ENCODE measurements at regions of chr1 and their contacts with region 1.

Region 1: GRCh38 chr1:245788269-245788668 is 633.5 kb downstream of the KIF26B start:
- DNase-seq: no peak
- ATAC-seq: peak in 2 of 4 donors; percentile 37 to 41
- H3K4me3 ChIP-seq: no peak overlapping the region
- H3K27ac ChIP-seq: peak overlapping the region in 1 of 12 donors; percentile 19
- H3K4me1 ChIP-seq: peaks cover 0 to 20% (median 1%) of the 10 kb centered on the region in 12 donors
- H3K27me3 ChIP-seq: no peaks in the 10 kb centered on the region
- CTCF ChIP-seq: no peak
- POLR2A ChIP-seq: no peak

Region 2: GRCh38 chr1:245549996-245550719 is 238.1 kb before region 1 on chr1:
- intact Hi-C with region 1: loop called in 1 of 10 experiments (anchors 5 kb)
- DNase-seq: no peak
- ATAC-seq: peak in 1 of 4 donors; percentile 26
- H3K4me3 ChIP-seq: peak overlapping the region in 1 of 12 donors; percentile 2
- H3K27ac ChIP-seq: peak overlapping the region in 6 of 12 donors; percentile 1 to 66 (median 41)
- H3K4me1 ChIP-seq: peaks cover 0 to 9% (median 0%) of the 10 kb centered on the region in 12 donors
- H3K27me3 ChIP-seq: no peaks in the 10 kb centered on the region
- CTCF ChIP-seq: no peak
- POLR2A ChIP-seq: no peak

Region 3: DNA sequence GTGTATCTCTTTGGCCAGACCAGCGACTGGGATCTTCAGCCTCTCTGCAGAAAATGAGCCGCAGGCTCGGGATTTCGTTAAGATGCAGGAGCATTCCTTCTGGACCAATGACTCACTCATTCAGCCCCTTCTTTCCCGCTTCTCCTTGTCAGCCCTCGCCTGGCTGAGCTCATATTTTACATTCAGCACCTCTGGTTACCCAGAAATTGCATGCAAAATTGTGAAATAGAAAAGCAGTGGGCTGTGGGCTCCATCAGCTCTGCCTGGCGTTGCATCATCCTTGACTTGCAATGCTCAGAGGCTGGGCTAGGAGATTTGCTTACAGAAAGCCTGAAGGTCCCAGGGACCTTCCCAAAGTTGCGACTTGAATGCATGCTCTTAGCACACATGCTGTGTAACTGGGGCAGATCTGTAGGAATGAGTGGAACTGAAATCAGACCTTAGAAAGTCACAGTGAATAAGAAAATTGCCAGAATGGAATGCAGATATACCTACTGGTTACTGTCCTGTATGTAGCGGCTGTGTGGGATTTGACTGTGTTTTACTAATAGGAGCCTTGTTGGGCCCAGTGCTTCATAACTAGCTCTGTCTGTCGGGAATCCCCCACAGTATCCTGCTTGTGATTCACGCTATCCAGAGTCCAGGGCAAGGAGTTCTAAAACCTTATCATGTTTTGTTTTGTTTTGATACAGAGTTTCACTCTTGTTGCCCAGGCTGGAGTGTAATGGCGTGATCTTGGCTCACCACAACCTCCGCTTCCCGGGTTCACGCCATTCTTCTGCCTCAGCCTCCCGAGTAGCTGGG is 188.7 kb before region 1 on chr1:
- intact Hi-C with region 1: no loop called
- DNase-seq: peak in 2 of 5 donors; percentile 47 to 53
- ATAC-seq: peak; percentile 34 to 85 (median 59)
- H3K4me3 ChIP-seq: peak overlapping the region in 4 of 12 donors; percentile 1 to 14 (median 7)
- H3K27ac ChIP-seq: peak overlapping the region in 3 of 12 donors; percentile 42 to 72 (median 56)
- H3K4me1 ChIP-seq: peaks cover 0 to 17% (median 12%) of the 10 kb centered on the region in 12 donors
- H3K27me3 ChIP-seq: peaks cover 0 to 15% (median 0%) of the 10 kb centered on the region in 9 donors
- CTCF ChIP-seq: no peak
- POLR2A ChIP-seq: no peak

Measured in heart left ventricle (tissue), 16 donors.